Naive thymus-derived CD4-positive, alpha-beta T cell (primary cell): ENCODE measurements at regions of chr17 and their contacts with region 1.

Region 1: DNA sequence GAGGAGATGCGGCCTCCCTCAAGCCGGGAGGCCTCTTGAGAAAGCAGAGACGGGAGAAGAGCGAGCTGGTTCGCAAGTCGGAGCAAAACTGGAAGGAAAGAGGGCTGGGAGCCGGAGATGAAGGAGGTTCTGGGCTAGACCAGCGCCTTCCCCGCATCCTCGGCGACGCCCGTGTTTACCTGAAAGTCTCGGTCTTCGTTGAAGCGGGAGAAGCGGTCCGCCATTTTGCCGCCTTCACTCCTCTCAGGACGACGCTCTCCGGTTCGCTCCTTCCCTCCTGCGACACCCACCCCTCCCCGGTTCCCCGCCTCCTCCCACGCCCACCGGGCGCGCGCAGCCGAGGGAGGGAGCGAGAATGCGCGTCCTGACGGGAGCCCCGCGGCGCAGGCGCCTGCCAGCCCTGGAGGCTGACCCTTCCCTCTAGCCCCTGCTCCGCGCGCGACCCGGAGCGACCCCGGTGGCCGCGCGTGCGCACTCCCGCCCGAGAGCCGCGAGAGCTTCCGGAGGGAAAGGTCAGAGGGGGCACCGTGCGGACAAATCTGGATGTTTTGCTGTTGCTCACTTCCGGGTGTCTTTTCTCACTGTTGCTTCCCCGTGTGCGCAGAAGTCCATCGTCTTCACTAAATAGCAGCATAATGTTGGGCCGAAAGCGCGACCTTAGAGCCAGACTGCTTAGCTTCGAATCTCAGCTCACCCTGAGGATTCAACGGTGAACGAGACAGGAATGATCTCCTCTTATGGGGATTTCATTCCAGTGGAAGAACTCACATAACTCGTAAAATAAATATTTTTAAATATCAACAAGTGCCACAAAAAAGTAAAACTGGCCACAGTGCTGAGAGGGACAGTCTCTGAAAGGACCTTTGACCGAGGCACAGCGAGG is at the start of gene GPATCH8:
- DNase-seq: peak; percentile 87 to 97 (median 94)
- ATAC-seq: peak; percentile 94
- H3K4me3 ChIP-seq: peak within 1 kb of the TSS; percentile 84
- H3K4me3 Mint-ChIP-seq: peak within 1 kb of the TSS; percentile 92 to 99 (median 98)
- H3K27ac ChIP-seq: peak within 1 kb of the TSS; percentile 93
- H3K27ac Mint-ChIP-seq: peak within 1 kb of the TSS; percentile 95 to 99 (median 97)
- H3K4me1 ChIP-seq: peaks cover 18 to 25% of the 10 kb centered on the region in 2 donors
- H3K4me1 Mint-ChIP-seq: peaks cover 24 to 50% (median 39%) of the 10 kb centered on the region in 7 donors
- H3K27me3 ChIP-seq: no peaks in the 10 kb centered on the region
- H3K27me3 Mint-ChIP-seq: peaks cover 0 to 5% (median 4%) of the 10 kb centered on the region in 5 donors
- total RNA-seq, gene GPATCH8: 45.0 to 88.5 (median 82.9) TPM

Region 2: DNA sequence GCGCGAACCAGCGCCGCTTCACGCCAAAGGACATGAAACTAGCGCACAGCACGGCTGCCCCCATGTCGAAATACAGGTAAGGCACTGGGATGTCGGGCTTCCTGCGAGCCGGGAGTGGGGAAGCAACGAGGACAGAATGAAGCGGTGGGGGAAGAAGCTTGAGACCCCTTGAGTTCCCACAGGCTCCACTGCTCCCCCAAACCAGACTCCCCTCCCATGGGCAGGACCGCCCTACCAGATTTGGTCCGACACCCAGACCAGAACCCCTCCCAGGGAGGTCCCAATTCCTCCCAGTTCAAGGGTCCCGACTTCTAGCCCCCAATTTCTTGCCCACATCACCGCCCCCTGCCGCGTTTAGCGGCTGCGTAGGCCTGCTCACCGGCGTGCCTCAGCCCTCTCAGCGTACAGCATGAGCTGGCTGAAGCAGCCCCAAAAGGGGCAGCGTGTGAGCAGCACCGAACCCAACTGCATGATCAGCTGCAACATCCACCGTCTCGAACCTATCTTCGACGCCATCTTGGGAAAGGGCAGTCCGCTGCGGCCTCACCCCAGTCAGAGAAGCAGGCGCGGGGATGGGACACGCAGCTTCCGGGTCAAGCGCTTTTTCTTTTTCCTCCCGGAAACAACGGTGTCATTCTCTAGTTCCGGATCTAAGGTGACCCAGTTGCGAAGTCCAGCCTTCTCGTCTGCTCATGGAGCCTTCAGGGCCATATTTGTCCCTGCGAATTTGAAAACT is 488.8 kb before region 1 on chr17 and contains the start of gene TMEM101:
- CTCF ChIA-PET with region 1: no interaction called
- POLR2A ChIA-PET with region 1: no interaction called
- intact Hi-C with region 1: loop called in 1 of 2 experiments (anchors 10 kb)
- DNase-seq: peak; percentile 63 to 90 (median 82)
- ATAC-seq: peak; percentile 99
- H3K4me3 ChIP-seq: peak within 1 kb of the TSS; percentile 96
- H3K4me3 Mint-ChIP-seq: peak within 1 kb of the TSS; percentile 93 to 100 (median 98)
- H3K27ac ChIP-seq: peak within 1 kb of the TSS; percentile 73
- H3K27ac Mint-ChIP-seq: peak within 1 kb of the TSS; percentile 84 to 99 (median 95)
- H3K4me1 ChIP-seq: peaks cover 8 to 9% of the 10 kb centered on the region in 2 donors
- H3K4me1 Mint-ChIP-seq: peaks cover 7 to 23% (median 11%) of the 10 kb centered on the region in 7 donors
- H3K27me3 ChIP-seq: no peaks in the 10 kb centered on the region
- H3K27me3 Mint-ChIP-seq: peaks cover 0 to under 1% (median 0%) of the 10 kb centered on the region in 5 donors
- total RNA-seq, gene TMEM101: 12.1 to 32.0 (median 30.5) TPM

Region 3: GRCh38 chr17:44199553-44200477 is 303.6 kb before region 1 on chr17 and contains the start of gene ATXN7L3:
- CTCF ChIA-PET with region 1: no interaction called
- POLR2A ChIA-PET with region 1: no interaction called
- intact Hi-C with region 1: loop called in 1 of 2 experiments (anchors 5 kb)
- DNase-seq: peak; percentile 90 to 99 (median 98)
- ATAC-seq: peak; percentile 91
- H3K4me3 ChIP-seq: peak within 1 kb of the TSS; percentile 68
- H3K4me3 Mint-ChIP-seq: peak within 1 kb of the TSS; percentile 90 to 97 (median 92)
- H3K27ac ChIP-seq: peak within 1 kb of the TSS; percentile 93
- H3K27ac Mint-ChIP-seq: peak within 1 kb of the TSS; percentile 91 to 97 (median 96)
- H3K4me1 ChIP-seq: peaks cover 27 to 34% of the 10 kb centered on the region in 2 donors
- H3K4me1 Mint-ChIP-seq: peaks cover 39 to 61% (median 53%) of the 10 kb centered on the region in 7 donors
- H3K27me3 ChIP-seq: no peaks in the 10 kb centered on the region
- H3K27me3 Mint-ChIP-seq: no peaks in the 10 kb centered on the region
- total RNA-seq, gene ATXN7L3: 93.5 to 130 (median 124) TPM

Region 4: GRCh38 chr17:44385287-44386181 is 117.9 kb before region 1 on chr17:
- CTCF ChIA-PET with region 1: no interaction called
- POLR2A ChIA-PET with region 1: no interaction called
- intact Hi-C with region 1: no loop called
- DNase-seq: peak; percentile 66 to 91 (median 78)
- ATAC-seq: peak; percentile 92
- H3K4me3 ChIP-seq: peak overlapping the region; percentile 66
- H3K4me3 Mint-ChIP-seq: peak overlapping the region; percentile 71 to 83 (median 79)
- H3K27ac ChIP-seq: peak overlapping the region; percentile 24
- H3K27ac Mint-ChIP-seq: peak overlapping the region in 2 of 9 donors; percentile 17 to 46
- H3K4me1 ChIP-seq: peaks cover 4 to 7% of the 10 kb centered on the region in 2 donors
- H3K4me1 Mint-ChIP-seq: peaks cover 5 to 19% (median 12%) of the 10 kb centered on the region in 7 donors
- H3K27me3 ChIP-seq: no peaks in the 10 kb centered on the region
- H3K27me3 Mint-ChIP-seq: peaks cover 4 to 31% (median 15%) of the 10 kb centered on the region in 5 donors

Region 5: GRCh38 chr17:44556832-44557606 is 53.6 kb after region 1 on chr17 and contains the start of gene FZD2:
- CTCF ChIA-PET with region 1: no interaction called
- POLR2A ChIA-PET with region 1: no interaction called
- intact Hi-C with region 1: loop called in 1 of 2 experiments (anchors 2 kb)
- DNase-seq: peak in 6 of 9 donors; percentile 5 to 41 (median 18)
- ATAC-seq: peak; percentile 83
- H3K4me3 ChIP-seq: peak within 1 kb of the TSS; percentile 70
- H3K4me3 Mint-ChIP-seq: peak within 1 kb of the TSS; percentile 88 to 97 (median 92)
- H3K27ac ChIP-seq: no peak within 1 kb of the TSS
- H3K27ac Mint-ChIP-seq: peak within 1 kb of the TSS in 4 of 9 donors; percentile 42 to 62 (median 58)
- H3K4me1 ChIP-seq: peaks cover 3 to 11% of the 10 kb centered on the region in 2 donors
- H3K4me1 Mint-ChIP-seq: peaks cover 18 to 33% (median 27%) of the 10 kb centered on the region in 7 donors
- H3K27me3 ChIP-seq: peaks cover 0 to 11% of the 10 kb centered on the region in 2 donors
- H3K27me3 Mint-ChIP-seq: peaks cover 69 to 86% (median 70%) of the 10 kb centered on the region in 5 donors
- total RNA-seq, gene FZD2: 0.16 to 1.7 (median 0.19) TPM in 3 of 5 experiments, not detected in the others

Region 6: GRCh38 chr17:44947461-44948314 is 444.3 kb after region 1 on chr17 and contains the start of gene KIF18B:
- CTCF ChIA-PET with region 1: no interaction called
- POLR2A ChIA-PET with region 1: no interaction called
- intact Hi-C with region 1: loop called in 1 of 2 experiments (anchors 5 kb)
- DNase-seq: peak; percentile 73 to 91 (median 86)
- ATAC-seq: peak; percentile 99
- H3K4me3 ChIP-seq: peak within 1 kb of the TSS; percentile 83
- H3K4me3 Mint-ChIP-seq: peak within 1 kb of the TSS; percentile 85 to 98 (median 93)
- H3K27ac ChIP-seq: peak within 1 kb of the TSS; percentile 69
- H3K27ac Mint-ChIP-seq: peak within 1 kb of the TSS; percentile 86 to 98 (median 93)
- H3K4me1 ChIP-seq: peaks cover 5 to 6% of the 10 kb centered on the region in 2 donors
- H3K4me1 Mint-ChIP-seq: peaks cover 0 to 40% (median 5%) of the 10 kb centered on the region in 7 donors
- H3K27me3 ChIP-seq: no peaks in the 10 kb centered on the region
- H3K27me3 Mint-ChIP-seq: peaks cover 0 to 7% (median 0%) of the 10 kb centered on the region in 5 donors
- total RNA-seq, gene KIF18B: 0.17 to 57.2 TPM in 2 of 5 experiments, not detected in the others